H1 (cell line): ENCODE measurements at regions of chr15 and their contacts with region 1.

Region 1: GRCh38 chr15:94324117-94324826 is 92.9 kb downstream of the MCTP2 start:
- DNase-seq: peak; percentile 19 to 54
- H3K4me3 ChIP-seq: no peak overlapping the region
- H3K27ac ChIP-seq: no peak overlapping the region
- H3K4me1 ChIP-seq: no peaks in the 10 kb centered on the region
- H3K27me3 ChIP-seq: no peaks in the 10 kb centered on the region
- CTCF ChIP-seq: peak; percentile 45 to 91 (median 89)
- EP300 ChIP-seq: no peak
- POLR2A ChIP-seq: no peak
- RAD21 ChIP-seq: peak; percentile 94 to 98

Region 2: DNA sequence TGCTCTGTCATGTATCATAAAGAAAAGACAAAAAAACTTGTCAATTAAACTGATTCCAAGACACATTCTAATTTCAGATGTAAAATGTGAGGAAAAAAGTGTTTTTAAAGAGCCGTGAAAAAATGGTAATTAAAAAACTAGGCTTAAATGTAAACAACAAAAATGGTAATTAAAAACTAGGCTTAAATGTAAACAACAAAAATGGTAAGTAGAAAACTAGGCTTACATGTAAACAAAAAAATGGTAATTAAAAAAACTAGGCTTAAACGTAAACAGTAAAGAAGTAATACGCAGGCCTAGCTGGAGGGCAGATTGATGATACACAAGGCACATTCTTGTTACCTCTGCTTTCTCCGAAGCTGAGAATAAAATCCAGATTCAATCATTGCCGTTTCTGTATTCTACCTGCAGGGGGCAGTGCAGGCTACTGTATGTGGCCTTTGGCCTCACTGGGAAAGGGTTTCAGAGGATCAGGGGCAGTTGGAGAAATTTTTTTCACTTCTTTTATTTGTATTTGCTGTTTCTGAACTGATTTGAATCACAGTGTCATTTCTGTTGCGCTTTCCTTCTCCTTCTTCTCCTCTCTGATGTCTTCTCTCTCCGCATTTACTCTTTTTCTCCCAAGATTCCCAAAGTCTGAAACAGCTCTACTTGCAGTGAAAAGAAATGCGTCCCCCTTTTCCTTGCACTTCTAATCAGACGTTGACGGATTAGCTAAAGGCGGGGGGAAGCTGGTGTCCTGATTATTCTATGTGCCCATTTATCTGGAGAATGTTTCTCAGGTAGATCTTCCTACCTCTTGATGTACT is 160.1 kb before region 1 on chr15:
- CTCF ChIA-PET with region 1: interaction called, 194 read pairs
- POLR2A ChIA-PET with region 1: no interaction called
- DNase-seq: peak; percentile 31 to 82
- H3K4me3 ChIP-seq: no peak overlapping the region
- H3K27ac ChIP-seq: no peak overlapping the region
- H3K4me1 ChIP-seq: no peaks in the 10 kb centered on the region
- H3K27me3 ChIP-seq: no peaks in the 10 kb centered on the region
- CTCF ChIP-seq: peak; percentile 35 to 88 (median 80)
- EP300 ChIP-seq: no peak
- POLR2A ChIP-seq: no peak
- RAD21 ChIP-seq: peak; percentile 95

Region 3: DNA sequence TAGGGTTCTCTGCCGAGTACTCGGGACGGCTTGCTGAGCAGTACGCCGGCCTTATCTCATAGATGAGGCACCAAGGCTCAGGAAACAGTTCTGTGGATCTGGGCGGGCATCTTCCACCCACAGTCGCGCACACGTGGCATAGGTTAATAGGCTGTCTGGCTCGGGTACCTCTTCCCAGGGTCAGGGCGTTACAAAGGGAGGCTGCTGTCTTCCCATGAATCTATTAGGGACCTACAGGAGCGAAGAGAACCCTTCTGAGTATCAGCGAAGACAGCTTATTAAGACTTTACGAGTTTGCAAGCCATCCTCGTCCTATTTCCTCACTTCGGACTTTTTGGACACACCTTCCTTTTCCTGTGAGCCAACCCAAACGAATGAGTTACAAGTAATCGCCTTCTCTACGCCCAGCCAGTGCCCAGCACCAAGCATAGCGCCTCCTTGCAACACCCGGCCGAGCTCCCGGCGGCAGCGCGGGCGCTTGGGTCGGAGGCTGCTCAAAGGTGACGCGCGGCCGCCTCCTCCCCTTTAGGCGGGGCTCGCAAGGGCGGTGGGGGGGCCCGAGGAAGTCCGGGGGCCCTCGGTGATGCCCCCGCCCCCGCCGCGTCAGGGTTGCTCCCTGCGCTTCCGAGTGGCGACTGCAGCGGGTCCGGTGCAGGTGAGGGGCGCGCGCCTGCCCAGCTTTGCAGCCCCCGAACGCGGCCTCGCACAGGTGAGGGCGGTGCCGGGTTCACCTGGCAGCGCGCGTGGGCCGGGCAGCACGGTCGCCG is 93.1 kb before region 1 on chr15 and contains the start of gene MCTP2:
- CTCF ChIA-PET with region 1: interaction called, 20 read pairs
- POLR2A ChIA-PET with region 1: no interaction called
- DNase-seq: peak; percentile 68 to 85
- H3K4me3 ChIP-seq: peak within 1 kb of the TSS; percentile 45 to 81 (median 66)
- H3K27ac ChIP-seq: no peak within 1 kb of the TSS
- H3K4me1 ChIP-seq: peaks cover 0 to 5% (median 0%) of the 10 kb centered on the region in 4 experiments; a peak in 3 of 7 replicates
- H3K27me3 ChIP-seq: peaks cover 0 to 11% (median 5%) of the 10 kb centered on the region in 4 experiments; a peak in 6 of 7 replicates
- CTCF ChIP-seq: peak in 1 of 3 experiments; percentile 31; a peak in 1 of 4 replicates
- EP300 ChIP-seq: no peak
- POLR2A ChIP-seq: no peak; a peak in 1 of 3 replicates
- RAD21 ChIP-seq: no peak
- total RNA-seq, gene MCTP2: 3.2 and 3.4 TPM in 2 replicates

Region 4: DNA sequence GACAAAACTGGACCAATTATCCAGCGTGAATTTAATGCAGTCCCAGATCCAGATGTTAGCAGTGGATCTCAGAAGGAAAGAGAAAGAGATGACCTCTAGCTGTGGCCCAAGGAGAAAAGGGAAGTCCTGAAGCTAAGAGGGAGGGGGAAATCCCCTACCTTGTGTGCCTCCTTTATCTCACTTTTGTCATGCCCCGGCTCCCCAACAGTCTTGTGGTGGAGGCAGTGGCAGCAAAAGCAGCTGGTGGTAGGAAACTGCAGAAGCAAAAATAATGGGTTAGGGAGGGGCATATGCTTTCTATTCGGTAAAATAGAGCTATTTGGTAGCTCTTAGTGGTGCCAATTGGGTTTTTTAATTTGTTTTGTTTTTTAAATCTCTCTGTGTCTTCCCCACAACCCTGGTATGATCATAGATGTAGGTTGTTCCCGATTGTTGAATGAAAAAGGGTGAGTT is 36.5 kb before region 1 on chr15:
- CTCF ChIA-PET with region 1: interaction called, 26 read pairs
- POLR2A ChIA-PET with region 1: no interaction called
- DNase-seq: no peak
- H3K4me3 ChIP-seq: no peak overlapping the region
- H3K27ac ChIP-seq: no peak overlapping the region
- H3K4me1 ChIP-seq: peaks cover 2 to 9% (median 4%) of the 10 kb centered on the region in 4 experiments
- H3K27me3 ChIP-seq: no peaks in the 10 kb centered on the region
- CTCF ChIP-seq: no peak
- EP300 ChIP-seq: no peak
- POLR2A ChIP-seq: no peak
- RAD21 ChIP-seq: no peak

Region 5: DNA sequence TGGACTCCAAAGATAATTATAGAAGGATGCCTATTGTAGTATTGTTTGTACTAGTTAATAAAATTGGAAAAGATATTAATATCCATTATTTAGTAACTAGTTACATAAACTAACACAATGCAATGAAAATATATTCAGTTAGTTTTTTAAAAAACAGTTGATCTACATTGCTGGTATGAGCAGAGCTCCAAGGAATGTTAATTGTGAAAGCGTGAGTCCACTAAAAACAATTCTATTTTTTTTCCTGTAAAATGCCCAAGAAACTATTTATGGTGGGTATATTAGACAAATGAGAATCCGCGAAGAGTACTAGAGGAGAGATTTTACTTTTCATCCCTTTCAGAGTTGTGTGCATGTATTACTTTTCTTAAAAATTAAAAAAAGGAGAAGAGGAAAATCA is 11.3 kb after region 1 on chr15:
- CTCF ChIA-PET with region 1: interaction called, 34 read pairs
- POLR2A ChIA-PET with region 1: interaction called, 3 read pairs
- DNase-seq: no peak
- H3K4me3 ChIP-seq: no peak overlapping the region
- H3K27ac ChIP-seq: no peak overlapping the region
- H3K4me1 ChIP-seq: no peaks in the 10 kb centered on the region
- H3K27me3 ChIP-seq: no peaks in the 10 kb centered on the region
- CTCF ChIP-seq: no peak
- EP300 ChIP-seq: no peak
- POLR2A ChIP-seq: no peak
- RAD21 ChIP-seq: no peak

Region 6: DNA sequence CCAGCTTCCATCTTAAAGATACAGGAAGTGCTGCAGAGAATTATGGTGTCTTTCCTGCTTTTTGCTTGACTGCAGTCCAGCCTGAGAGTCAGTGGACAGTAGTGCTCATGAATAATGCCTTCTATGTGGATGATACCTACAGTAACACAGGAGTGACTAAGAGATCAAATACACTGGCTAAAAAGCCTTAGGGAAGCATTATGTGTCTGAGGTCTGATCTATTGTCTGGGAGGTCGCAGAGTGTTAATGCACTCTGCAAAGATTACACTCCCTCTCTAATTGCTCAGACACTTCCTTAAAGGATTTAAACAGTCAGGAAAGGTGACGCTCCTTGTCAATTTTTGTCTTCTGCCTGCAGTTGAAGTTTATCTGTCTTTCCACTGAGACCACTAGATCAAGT is 90.6 kb after region 1 on chr15:
- CTCF ChIA-PET with region 1: no interaction called
- POLR2A ChIA-PET with region 1: no interaction called
- DNase-seq: no peak
- H3K4me3 ChIP-seq: no peak overlapping the region
- H3K27ac ChIP-seq: no peak overlapping the region
- H3K4me1 ChIP-seq: no peaks in the 10 kb centered on the region
- H3K27me3 ChIP-seq: no peaks in the 10 kb centered on the region
- CTCF ChIP-seq: no peak
- EP300 ChIP-seq: no peak
- POLR2A ChIP-seq: no peak
- RAD21 ChIP-seq: no peak